ENCODE measurements at regions of chr2 and their contacts with region 1.

Region 1: GRCh38 chr2:61658841-61659780 is 121.0 kb upstream of the XPO1 start:
- DNase-seq: no peak
- H3K4me3 Mint-ChIP-seq: no peak overlapping the region
- H3K27ac Mint-ChIP-seq: no peak overlapping the region
- H3K4me1 Mint-ChIP-seq: peaks cover 9% of the 10 kb centered on the region
- H3K27me3 Mint-ChIP-seq: no peaks in the 10 kb centered on the region

Region 2: GRCh38 chr2:61434314-61434713 is 224.8 kb before region 1 on chr2:
- CTCF ChIA-PET with region 1: no interaction called
- POLR2A ChIA-PET with region 1: no interaction called
- DNase-seq: no peak
- H3K4me3 Mint-ChIP-seq: no peak overlapping the region
- H3K27ac Mint-ChIP-seq: no peak overlapping the region
- H3K4me1 Mint-ChIP-seq: peaks cover 28% of the 10 kb centered on the region
- H3K27me3 Mint-ChIP-seq: no peaks in the 10 kb centered on the region

Region 3: DNA sequence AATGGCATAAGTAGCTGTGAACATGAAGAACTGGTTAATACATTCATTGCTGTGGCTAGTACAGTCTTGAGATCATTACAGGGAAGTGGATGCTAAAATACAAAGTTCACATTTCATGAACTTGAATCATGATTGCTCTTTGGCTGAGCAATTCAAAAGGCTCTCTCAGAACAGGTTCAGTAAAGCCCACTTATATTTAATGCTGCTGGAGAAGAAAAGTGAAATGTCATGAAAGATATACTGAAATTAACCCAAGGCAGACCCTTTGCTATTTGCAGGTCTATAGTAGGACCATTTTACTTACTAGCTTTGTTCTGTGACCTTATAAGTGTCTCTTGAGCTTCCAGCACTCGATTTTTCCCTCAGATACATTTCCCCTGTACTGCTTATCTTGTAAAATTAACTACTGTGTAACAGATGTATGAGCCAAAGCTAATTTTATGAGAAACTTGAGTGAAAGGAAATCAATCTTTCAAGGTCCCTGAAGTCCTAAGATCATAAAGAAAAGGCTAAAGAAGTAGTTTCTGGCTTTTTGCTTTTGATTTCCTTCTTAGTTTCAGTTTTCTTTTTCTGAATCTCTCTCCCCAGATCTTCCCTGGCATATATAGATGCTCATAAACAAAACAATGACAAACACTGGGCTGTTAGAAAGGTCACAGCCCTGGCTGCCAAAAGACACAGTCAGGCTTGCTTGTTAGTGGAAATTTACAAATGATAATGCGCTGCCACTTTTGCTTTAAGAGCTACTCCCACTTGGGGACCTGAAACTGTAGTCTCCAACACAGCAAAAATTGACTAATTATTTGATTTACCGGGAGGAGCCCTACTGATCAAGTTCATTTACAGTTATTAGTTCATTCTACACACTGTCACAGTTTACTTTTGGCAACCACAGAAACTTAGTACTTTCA is 11.7 kb after region 1 on chr2:
- CTCF ChIA-PET with region 1: interaction called, 12 read pairs
- POLR2A ChIA-PET with region 1: interaction called, 3 read pairs
- DNase-seq: peak; percentile 33
- H3K4me3 Mint-ChIP-seq: peak overlapping the region; percentile 63
- H3K27ac Mint-ChIP-seq: peak overlapping the region; percentile 72
- H3K4me1 Mint-ChIP-seq: peaks cover 17% of the 10 kb centered on the region
- H3K27me3 Mint-ChIP-seq: no peaks in the 10 kb centered on the region